ENCODE measurements at regions of chr22 and their contacts with region 1.

Region 1: GRCh38 chr22:20418211-20418788 is 19.3 kb downstream of the SCARF2 start:
- DNase-seq: peak; percentile 83

Region 2: DNA sequence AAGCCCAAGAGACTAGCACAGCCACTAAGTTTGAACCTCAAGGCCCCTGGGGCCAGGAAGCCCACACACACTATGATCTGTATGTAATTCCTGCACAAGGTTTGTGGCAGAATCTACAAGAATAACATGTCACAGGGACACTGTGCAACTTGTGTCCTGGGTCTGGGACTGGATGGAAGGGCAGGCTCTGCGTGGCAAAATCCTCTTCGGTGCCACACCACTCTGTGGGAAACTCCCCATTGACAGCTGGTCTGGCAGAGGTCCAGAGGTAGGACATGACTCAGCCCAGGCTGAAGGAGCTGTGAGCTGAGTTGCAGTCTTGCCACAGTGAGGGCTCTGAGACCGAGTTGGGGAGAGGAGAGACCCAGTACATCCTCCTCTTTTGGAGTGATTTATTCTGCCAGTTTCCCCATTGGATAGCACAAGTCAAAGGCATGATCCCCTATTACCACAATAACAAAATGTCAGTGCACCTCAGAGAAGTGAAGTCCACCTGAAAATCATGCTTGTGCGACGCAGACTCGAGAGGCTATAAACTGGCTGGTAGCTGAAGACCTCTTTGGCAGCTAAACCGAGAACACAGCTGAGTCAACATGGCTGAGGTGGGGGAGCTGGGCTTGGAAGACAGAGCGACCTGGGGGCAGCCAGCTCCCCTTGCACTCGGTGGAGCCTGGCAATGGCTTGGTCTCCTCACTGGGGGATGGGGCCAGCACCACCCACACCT is 332.3 kb after region 1 on chr22:
- in situ Hi-C with region 1: loop called (anchors 25 kb)
- DNase-seq: no peak

Region 3: DNA sequence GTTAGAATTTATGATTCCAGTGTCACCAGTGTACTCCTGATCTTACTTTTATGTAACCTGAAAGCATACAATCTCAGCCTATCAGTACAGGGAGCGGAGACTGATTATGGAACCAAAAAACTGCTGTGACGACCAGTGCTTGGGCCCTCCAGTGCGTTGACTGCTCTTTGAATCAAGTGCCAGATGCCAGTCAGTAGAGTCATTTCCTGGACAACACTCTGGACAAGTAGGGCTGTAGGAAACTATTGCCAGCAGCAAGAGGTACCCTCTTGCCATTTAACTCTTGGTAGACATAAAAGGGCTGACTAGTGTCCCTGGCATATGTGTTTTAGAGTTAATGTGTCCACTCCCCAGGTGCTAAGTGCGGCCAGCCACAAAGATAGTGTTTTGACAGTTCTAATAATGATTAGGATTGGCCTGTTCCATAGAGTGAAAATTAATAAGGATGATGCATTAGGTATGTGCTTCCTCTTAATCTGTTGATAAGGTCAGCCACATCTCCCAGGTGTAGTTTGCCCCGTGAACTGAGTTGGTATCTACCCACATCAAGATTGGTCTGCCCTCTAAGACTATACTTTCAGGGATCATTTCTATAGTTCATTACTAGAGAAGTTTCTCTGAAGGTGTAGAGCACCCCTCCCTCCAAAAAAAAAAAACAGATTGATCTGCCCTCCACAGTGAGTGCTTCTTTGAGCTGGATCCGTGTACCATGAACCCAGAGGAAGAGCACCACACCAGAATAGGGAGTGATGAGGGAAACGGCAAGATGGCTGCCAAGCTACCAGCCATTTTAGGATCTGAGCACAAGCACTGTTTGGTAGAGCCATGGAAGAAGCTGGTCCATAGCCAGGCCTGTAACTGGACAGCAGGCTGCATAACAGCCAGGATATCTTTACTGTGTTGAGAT is 528.0 kb after region 1 on chr22:
- in situ Hi-C with region 1: no loop called
- DNase-seq: no peak